Activated CD4-positive, alpha-beta T cell treated with anti-CD3 and anti-CD28 coated beads, Interleukin-2, amount 10 ng/mL, durations not matched to agents 24 days and 14 days (primary cell): ENCODE measurements at regions of chr5 and their contacts with region 1.

Region 1: GRCh38 chr5:79235634-79236363 is at the start of gene JMY:
- DNase-seq: peak; percentile 94
- H3K4me3 Mint-ChIP-seq: peak within 1 kb of the TSS; percentile 92
- H3K27ac Mint-ChIP-seq: peak within 1 kb of the TSS; percentile 86
- H3K4me1 Mint-ChIP-seq: peaks cover 19% of the 10 kb centered on the region
- H3K27me3 Mint-ChIP-seq: peaks cover 3% of the 10 kb centered on the region
- total RNA-seq, gene JMY: 4.5 and 5.6 TPM in 2 replicates

Region 2: GRCh38 chr5:78984439-78985115 is 251.2 kb before region 1 on chr5:
- intact Hi-C with region 1: loop called (anchors 2 kb)
- DNase-seq: peak; percentile 95
- H3K4me3 Mint-ChIP-seq: peak overlapping the region; percentile 88
- H3K27ac Mint-ChIP-seq: peak overlapping the region; percentile 92
- H3K4me1 Mint-ChIP-seq: peaks cover 34% of the 10 kb centered on the region
- H3K27me3 Mint-ChIP-seq: no peaks in the 10 kb centered on the region

Region 3: GRCh38 chr5:79514391-79515105 is 278.7 kb after region 1 on chr5:
- intact Hi-C with region 1: loop called (anchors 5 kb)
- DNase-seq: peak; percentile 97
- H3K4me3 Mint-ChIP-seq: peak overlapping the region; percentile 88
- H3K27ac Mint-ChIP-seq: peak overlapping the region; percentile 97
- H3K4me1 Mint-ChIP-seq: peaks cover 32% of the 10 kb centered on the region
- H3K27me3 Mint-ChIP-seq: peaks cover 23% of the 10 kb centered on the region

Region 4: DNA sequence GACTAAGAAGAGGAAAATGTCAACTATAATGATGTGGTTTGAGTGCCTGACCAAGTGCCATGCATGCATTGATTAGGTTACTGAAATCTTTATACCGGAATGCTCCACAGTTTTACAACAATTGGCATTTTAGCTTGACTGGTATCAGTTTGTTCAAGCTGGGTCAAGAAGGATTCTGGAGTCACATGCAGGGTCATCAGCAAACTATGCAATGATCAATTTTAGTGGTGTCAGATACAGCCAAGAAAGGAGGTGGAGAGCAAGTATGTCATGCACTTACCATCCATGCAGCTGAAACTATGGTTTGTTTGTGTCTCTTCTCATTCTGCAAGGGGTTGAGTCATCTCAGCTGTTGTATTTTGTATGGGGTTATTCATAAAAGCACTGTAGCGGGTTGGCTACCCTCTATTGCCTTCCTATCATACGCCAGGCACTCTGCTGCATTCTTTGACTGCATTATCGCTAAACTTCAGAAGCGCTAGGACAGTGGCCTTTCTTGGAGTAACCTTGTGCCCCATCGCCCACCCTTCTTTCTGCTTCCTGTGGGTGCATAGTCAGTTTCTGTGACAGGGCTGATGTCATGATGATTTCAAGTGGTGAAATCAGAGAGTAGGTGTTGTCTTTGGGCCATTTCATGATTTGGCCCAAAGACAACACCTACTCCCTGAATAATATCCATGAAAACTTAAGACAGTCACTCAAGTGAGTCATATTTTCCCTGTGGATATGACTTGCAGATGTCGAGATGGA is 609.8 kb after region 1 on chr5:
- intact Hi-C with region 1: loop called (anchors 5 kb)
- DNase-seq: peak; percentile 75
- H3K4me3 Mint-ChIP-seq: peak overlapping the region; percentile 9
- H3K27ac Mint-ChIP-seq: peak overlapping the region; percentile 75
- H3K4me1 Mint-ChIP-seq: peaks cover 21% of the 10 kb centered on the region
- H3K27me3 Mint-ChIP-seq: peaks cover under 1% of the 10 kb centered on the region

Region 5: GRCh38 chr5:80407735-80408482 is 1172.1 kb after region 1 on chr5 and contains the start of gene ZFYVE16:
- intact Hi-C with region 1: loop called (anchors 5 kb)
- DNase-seq: peak; percentile 99
- H3K4me3 Mint-ChIP-seq: peak within 1 kb of the TSS; percentile 97
- H3K27ac Mint-ChIP-seq: peak within 1 kb of the TSS; percentile 99
- H3K4me1 Mint-ChIP-seq: peaks cover 15% of the 10 kb centered on the region
- H3K27me3 Mint-ChIP-seq: peaks cover 7% of the 10 kb centered on the region
- total RNA-seq, gene ZFYVE16: 8.1 and 9.4 TPM in 2 replicates